ENCODE measurements at regions of chr2 and their contacts with region 1.

Region 1: DNA sequence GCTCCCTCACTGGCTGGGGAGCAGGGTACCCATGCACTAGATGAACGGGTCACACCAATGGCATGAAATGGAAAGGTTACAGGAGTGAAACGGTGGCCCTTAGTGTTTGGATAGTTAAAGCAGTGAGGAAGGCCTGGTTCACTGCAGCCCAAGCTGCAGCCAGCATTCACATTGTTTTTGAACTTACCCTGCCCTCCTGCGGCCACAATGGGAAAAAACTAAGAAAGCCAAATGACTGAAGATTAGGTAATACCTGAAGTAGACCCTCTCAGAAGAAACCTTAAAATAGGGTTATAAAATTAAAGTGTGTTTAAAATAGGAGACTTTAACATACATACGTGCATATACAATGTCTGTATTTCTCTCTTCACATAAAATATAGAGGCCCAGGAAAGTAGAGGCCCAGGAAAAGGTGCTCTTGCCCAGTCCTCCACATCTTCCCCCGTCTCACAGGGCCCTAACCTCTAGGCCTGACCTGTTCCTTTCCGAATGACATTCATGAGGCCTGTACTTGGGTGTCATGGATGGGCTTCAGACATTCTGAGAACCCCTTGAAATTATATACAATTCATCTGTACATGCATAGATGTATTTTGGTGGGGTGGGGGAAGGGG is 33.3 kb downstream of the DOK1 start:
- DNase-seq: peak; percentile 25 to 41
- ATAC-seq: peak; percentile 70 to 77
- H3K4me3 ChIP-seq: no peak overlapping the region
- H3K27ac ChIP-seq: no peak overlapping the region
- H3K4me1 ChIP-seq: no peaks in the 10 kb centered on the region
- H3K27me3 ChIP-seq: peaks cover 0 to 4% (median 2%) of the 10 kb centered on the region in 3 donors
- CTCF ChIP-seq: peak in 4 of 5 experiments; percentile 25 to 58 (median 50)
- POLR2A ChIP-seq: no peak

Region 2: DNA sequence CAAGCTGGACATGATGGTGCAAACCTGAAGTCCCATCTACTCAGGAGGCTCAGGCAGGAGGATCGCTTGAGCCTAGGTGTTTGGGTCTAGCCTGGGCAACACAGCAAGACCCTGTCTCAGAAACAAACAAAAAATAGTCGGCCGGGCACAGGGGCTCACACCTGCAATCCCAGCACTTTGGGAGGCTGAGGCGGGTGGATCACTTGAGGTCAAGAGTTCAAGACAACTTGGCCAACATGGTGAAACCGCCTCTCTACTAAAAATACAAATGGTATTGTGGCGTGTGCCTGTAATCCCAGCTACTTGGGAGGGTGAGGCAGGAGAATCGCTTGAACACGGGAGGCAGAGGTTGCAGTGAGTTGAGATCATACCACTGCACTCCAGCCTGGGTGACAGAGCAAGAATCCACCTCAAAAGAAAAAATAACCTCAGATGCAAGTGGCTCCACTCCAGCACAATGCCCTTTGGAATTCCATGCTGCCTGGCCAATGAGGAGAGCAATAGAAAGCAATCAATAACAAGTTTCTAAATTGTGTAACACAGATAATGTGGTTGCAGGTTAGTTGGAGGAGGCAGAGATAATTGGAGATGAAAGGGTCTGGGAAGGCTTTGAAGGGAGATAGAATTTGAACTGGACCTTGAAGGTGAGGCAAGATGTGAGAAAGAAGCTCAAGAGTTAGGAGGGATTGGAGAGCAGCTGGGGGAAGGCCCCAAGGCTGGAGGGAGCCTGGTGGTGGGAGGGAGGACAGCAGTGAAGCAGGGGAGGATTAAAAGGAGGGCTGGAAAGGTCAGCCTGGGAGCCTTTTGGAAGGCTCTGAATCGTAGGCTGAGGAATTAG is 98.9 kb before region 1 on chr2:
- in situ Hi-C with region 1: loop called in 3 of 4 experiments (anchors 5 to 10 kb)
- intact Hi-C with region 1: no loop called
- DNase-seq: no peak
- ATAC-seq: no peak
- H3K4me3 ChIP-seq: no peak overlapping the region
- H3K27ac ChIP-seq: no peak overlapping the region
- H3K4me1 ChIP-seq: peaks cover 2 to 3% of the 10 kb centered on the region in 2 donors
- H3K27me3 ChIP-seq: no peaks in the 10 kb centered on the region
- CTCF ChIP-seq: no peak
- POLR2A ChIP-seq: no peak

Region 3: DNA sequence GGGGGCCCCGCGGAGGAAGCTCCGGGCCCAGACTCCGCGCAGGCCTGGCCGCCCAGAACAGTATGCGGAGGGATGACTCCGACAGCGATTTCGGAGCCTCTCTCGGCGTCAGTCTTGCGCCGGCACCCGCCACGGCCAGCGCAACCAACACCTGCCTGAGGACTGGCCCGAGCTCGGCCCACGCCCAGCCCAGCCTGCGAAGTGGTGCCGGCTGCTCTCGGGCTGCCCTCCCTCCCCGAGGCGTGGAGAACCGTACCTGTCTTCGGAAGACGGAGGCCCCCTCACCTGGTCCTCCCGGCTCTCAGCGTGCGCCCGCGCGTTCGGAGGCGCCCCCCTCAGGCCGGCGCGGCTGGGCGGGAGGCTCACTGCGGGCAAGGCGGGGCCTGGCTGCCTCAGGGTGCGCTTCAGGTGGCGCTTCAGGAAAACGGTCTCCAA is 60.3 kb after region 1 on chr2 and contains the start of gene M1AP:
- in situ Hi-C with region 1: no loop called
- intact Hi-C with region 1: no loop called
- DNase-seq: no peak
- ATAC-seq: no peak
- H3K4me3 ChIP-seq: peak within 1 kb of the TSS in 1 of 4 donors; percentile 28
- H3K27ac ChIP-seq: no peak within 1 kb of the TSS
- H3K4me1 ChIP-seq: no peaks in the 10 kb centered on the region
- H3K27me3 ChIP-seq: peaks cover 12 to 19% (median 17%) of the 10 kb centered on the region in 3 donors
- CTCF ChIP-seq: no peak
- POLR2A ChIP-seq: no peak
- total RNA-seq, gene M1AP: 0.20 TPM in 1 of 4 donors, not detected in the others